A673 (cell line): ENCODE measurements at regions of chr4 and their contacts with region 1.

Region 1: GRCh38 chr4:184649026-184649970 is at the starts of genes CASP3 and PRIMPOL:
- DNase-seq: peak; percentile 97
- H3K4me3 ChIP-seq: peak within 1 kb of the TSS; percentile 94
- H3K27ac ChIP-seq: peak within 1 kb of the TSS; percentile 93
- H3K4me1 ChIP-seq: peaks cover 42% of the 10 kb centered on the region
- H3K27me3 ChIP-seq: no peaks in the 10 kb centered on the region
- CTCF ChIP-seq: 0 out of 2 replicates have a peak, but pooled peaks have one; percentile 23
- total RNA-seq, gene CASP3: 52.6 and 65.5 TPM in 2 replicates
- total RNA-seq, gene PRIMPOL: 25.7 and 28.4 TPM in 2 replicates

Region 2: DNA sequence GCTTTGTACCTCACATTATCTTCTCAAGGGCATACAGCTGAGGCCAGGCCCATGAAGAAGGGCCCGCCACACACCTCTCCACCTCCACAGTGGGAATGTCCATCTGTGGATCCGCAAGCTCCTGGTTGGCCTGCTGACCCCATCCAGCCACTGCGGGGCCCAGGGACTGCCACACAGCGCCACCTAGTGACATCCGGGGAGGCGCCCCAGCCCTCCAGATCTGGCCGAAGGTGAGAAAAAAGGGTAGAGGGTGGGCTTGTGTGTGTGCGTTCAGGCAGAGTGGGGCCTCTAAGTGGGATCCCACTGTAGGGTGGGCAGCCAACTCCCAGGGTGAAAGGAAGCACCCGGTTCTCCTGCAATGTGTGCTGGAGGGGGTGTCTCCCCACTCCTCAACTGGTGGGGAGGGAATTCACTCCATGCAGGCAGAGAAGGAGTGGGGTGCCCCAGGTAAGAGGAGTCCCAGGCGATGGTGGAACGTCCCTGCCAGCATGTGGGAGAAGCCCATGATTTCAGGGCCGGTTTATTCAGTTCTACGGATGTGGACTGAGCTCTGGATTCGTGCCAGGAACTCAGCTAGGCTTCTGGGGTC is 548.9 kb before region 1 on chr4:
- CTCF ChIA-PET with region 1: no interaction called
- POLR2A ChIA-PET with region 1: no interaction called
- intact Hi-C with region 1: no loop called
- DNase-seq: no peak
- H3K4me3 ChIP-seq: no peak overlapping the region
- H3K27ac ChIP-seq: no peak overlapping the region
- H3K4me1 ChIP-seq: no peaks in the 10 kb centered on the region
- H3K27me3 ChIP-seq: no peaks in the 10 kb centered on the region
- CTCF ChIP-seq: no peak

Region 3: GRCh38 chr4:184355111-184355604 is 294.1 kb before region 1 on chr4:
- CTCF ChIA-PET with region 1: no interaction called
- POLR2A ChIA-PET with region 1: interaction called, 8 read pairs
- intact Hi-C with region 1: loop called (anchors 5 kb)
- DNase-seq: peak; percentile 98
- H3K4me3 ChIP-seq: no peak overlapping the region
- H3K27ac ChIP-seq: peak overlapping the region; percentile 93
- H3K4me1 ChIP-seq: peaks cover 57% of the 10 kb centered on the region
- H3K27me3 ChIP-seq: no peaks in the 10 kb centered on the region
- CTCF ChIP-seq: no peak

Region 4: GRCh38 chr4:184375027-184375426 is 274.3 kb before region 1 on chr4:
- CTCF ChIA-PET with region 1: no interaction called
- POLR2A ChIA-PET with region 1: no interaction called
- intact Hi-C with region 1: loop called (anchors 5 kb)
- DNase-seq: no peak
- H3K4me3 ChIP-seq: no peak overlapping the region
- H3K27ac ChIP-seq: no peak overlapping the region
- H3K4me1 ChIP-seq: peaks cover 20% of the 10 kb centered on the region
- H3K27me3 ChIP-seq: no peaks in the 10 kb centered on the region
- CTCF ChIP-seq: no peak

Region 5: DNA sequence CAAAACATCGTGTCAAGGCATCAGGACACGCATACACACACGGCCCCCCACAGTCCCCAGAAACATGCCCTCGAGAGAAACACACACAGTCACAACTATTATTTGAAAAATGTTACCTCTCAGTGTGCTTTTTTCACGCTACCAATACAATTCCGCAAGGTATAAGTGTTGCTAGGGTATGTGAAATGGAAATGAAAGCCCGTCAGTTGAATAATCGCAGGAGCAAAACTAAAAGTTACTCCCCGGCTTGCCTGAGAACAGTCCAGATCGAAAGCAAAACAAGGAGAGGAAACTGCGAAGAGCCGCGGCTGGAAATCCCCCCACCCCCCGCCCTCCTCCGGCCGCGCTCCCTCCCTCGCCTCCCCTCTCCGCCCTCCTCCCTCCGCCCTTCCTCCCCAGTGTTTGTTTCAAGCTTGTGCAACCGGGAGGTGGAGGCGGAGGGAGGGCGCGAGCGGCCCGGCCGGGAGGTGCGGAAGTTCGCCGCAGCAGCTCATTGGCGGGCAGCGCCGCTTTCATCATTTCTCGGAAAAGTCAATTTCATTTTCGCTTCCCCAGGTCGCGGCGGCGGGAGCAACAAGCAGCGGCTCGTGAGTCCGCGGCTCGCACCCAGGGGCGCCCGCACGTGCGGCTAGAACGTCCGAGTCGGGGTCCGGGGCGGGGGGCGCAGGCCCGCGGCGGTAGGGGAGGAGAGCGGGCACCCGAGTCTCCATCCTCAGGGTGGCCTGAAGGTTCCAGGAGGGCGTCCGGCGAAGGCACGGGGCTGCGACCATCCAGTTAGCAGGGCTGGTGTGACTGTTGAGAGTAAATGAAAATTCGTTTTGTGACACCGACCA is 174.8 kb before region 1 on chr4 and contains the start of gene IRF2:
- CTCF ChIA-PET with region 1: no interaction called
- POLR2A ChIA-PET with region 1: interaction called, 6 read pairs
- intact Hi-C with region 1: loop called (anchors 2 kb)
- DNase-seq: peak; percentile 99
- H3K4me3 ChIP-seq: peak within 1 kb of the TSS; percentile 91
- H3K27ac ChIP-seq: peak within 1 kb of the TSS; percentile 91
- H3K4me1 ChIP-seq: peaks cover 8% of the 10 kb centered on the region
- H3K27me3 ChIP-seq: no peaks in the 10 kb centered on the region
- CTCF ChIP-seq: no peak
- total RNA-seq, gene IRF2: 27.5 and 28.2 TPM in 2 replicates

Region 6: DNA sequence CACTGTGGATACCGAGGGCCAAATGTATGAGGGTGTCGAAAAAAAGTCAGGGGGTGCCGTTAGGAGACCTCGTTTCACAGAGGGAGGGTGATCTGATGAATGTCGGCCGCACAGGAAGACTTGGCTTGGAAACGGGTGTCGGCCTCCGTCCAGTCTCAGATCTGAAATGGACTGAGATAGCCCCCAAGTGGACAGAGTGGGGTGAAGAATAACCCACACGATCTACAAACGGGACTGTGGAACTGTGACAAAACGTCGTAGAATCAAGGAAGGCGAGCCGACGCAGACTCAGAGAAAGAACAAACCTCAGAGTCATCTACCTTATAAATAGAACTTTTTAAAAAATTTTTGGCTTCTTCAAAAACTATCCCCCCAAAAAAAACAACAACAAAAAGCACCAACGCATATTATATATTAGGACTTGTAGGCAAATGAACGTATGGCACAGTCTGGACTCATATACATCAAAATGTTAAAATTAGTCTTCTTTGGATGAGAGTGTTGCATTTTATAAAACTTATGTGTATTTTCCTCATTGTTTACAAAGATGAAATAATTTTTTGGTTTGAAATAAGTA is 111.2 kb before region 1 on chr4:
- CTCF ChIA-PET with region 1: no interaction called
- POLR2A ChIA-PET with region 1: no interaction called
- intact Hi-C with region 1: loop called (anchors 10 kb)
- DNase-seq: peak; percentile 90
- H3K4me3 ChIP-seq: peak overlapping the region; percentile 78
- H3K27ac ChIP-seq: peak overlapping the region; percentile 92
- H3K4me1 ChIP-seq: peaks cover 20% of the 10 kb centered on the region
- H3K27me3 ChIP-seq: no peaks in the 10 kb centered on the region
- CTCF ChIP-seq: peak; percentile 65

Region 7: DNA sequence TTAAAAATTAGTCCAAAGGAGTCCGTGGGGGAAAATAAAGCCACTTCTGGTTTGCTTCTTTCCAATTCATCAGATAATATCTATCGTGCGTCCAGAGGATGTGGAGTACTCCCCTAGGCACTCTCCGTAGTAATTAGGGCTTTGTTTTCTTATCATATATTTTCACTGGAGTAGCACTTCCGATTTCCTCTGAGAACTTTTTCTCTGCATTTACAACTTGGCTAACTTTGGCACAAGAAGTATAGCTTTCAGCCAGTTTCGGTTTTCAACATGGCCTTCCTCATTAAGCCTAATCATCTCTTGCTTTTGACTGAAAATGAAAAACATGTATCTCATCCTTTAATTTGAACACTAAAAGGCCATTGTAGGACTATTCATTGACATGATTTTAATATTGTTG is 80.5 kb before region 1 on chr4:
- CTCF ChIA-PET with region 1: interaction called, 3 read pairs
- POLR2A ChIA-PET with region 1: interaction called, 15 read pairs
- intact Hi-C with region 1: no loop called
- DNase-seq: peak; percentile 29
- H3K4me3 ChIP-seq: peak overlapping the region; percentile 0
- H3K27ac ChIP-seq: no peak overlapping the region
- H3K4me1 ChIP-seq: no peaks in the 10 kb centered on the region
- H3K27me3 ChIP-seq: no peaks in the 10 kb centered on the region
- CTCF ChIP-seq: no peak

Region 8: DNA sequence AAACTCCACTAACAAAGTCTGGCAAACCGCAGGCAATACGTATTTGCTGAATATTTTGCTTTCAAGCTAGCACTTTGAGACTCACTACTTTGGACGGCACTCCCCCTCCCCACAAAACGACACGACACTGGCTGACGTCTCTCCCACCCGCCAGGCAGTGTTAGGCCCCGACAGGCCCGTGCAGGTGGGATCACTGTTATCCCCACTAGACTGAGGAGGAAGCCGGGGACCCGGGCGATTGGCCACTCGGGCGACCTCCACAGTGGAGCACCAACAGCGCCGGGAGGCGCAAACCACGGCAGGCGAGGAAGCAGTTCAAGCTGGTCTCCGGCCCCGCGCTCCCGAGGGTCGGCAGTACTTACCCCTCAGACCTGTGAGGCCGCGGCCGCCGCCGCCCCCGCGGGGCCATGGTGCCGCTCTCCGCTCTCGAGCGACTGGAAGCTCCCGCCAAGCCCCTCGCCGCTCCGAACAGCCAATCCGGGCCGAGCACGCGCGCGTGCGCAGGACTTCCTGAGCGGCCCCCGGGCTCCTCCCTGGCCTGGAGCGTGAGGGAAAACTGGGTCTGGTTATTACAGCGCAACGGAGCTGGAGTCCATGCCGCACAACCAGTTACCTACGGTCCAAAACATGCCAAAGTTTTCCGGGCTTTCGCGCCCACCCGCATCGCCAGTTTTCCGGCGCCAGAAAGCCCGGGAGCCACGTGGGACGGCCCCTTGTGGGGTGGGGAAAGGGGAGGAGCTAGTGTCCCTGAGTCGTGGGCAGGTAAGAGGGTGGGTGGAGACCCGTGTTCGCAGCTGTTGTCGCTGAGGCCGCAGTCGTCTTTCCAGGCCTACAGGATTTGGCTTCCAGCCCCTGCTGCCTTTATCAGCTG is 84.6 kb after region 1 on chr4 and contains the start of gene CENPU:
- CTCF ChIA-PET with region 1: interaction called, 6 read pairs
- POLR2A ChIA-PET with region 1: no interaction called
- intact Hi-C with region 1: loop called (anchors 5 kb)
- DNase-seq: peak; percentile 99
- H3K4me3 ChIP-seq: peak within 1 kb of the TSS; percentile 74
- H3K27ac ChIP-seq: peak within 1 kb of the TSS; percentile 88
- H3K4me1 ChIP-seq: peaks cover 19% of the 10 kb centered on the region
- H3K27me3 ChIP-seq: no peaks in the 10 kb centered on the region
- CTCF ChIP-seq: no peak
- total RNA-seq, gene CENPU: 87.3 and 97.2 TPM in 2 replicates